ENCODE measurements at regions of chr1 and their contacts with region 1.

Region 1: GRCh38 chr1:240608707-240609106 is 3.2 kb downstream of the GREM2 start:
- DNase-seq: peak; percentile 13
- ATAC-seq: no peak
- H3K4me3 Mint-ChIP-seq: no peak overlapping the region
- H3K27ac Mint-ChIP-seq: no peak overlapping the region
- H3K4me1 Mint-ChIP-seq: peaks cover 20% of the 10 kb centered on the region
- H3K27me3 Mint-ChIP-seq: peaks cover 38% of the 10 kb centered on the region
- CTCF ChIP-seq: no peak

Region 2: GRCh38 chr1:240455228-240455821 is 153.4 kb before region 1 on chr1:
- CTCF ChIA-PET with region 1: interaction called, 5 read pairs
- POLR2A ChIA-PET with region 1: no interaction called
- intact Hi-C with region 1: loop called (anchors 10 kb)
- DNase-seq: no peak
- ATAC-seq: no peak
- H3K4me3 Mint-ChIP-seq: no peak overlapping the region
- H3K27ac Mint-ChIP-seq: no peak overlapping the region
- H3K4me1 Mint-ChIP-seq: no peaks in the 10 kb centered on the region
- H3K27me3 Mint-ChIP-seq: no peaks in the 10 kb centered on the region
- CTCF ChIP-seq: no peak

Region 3: DNA sequence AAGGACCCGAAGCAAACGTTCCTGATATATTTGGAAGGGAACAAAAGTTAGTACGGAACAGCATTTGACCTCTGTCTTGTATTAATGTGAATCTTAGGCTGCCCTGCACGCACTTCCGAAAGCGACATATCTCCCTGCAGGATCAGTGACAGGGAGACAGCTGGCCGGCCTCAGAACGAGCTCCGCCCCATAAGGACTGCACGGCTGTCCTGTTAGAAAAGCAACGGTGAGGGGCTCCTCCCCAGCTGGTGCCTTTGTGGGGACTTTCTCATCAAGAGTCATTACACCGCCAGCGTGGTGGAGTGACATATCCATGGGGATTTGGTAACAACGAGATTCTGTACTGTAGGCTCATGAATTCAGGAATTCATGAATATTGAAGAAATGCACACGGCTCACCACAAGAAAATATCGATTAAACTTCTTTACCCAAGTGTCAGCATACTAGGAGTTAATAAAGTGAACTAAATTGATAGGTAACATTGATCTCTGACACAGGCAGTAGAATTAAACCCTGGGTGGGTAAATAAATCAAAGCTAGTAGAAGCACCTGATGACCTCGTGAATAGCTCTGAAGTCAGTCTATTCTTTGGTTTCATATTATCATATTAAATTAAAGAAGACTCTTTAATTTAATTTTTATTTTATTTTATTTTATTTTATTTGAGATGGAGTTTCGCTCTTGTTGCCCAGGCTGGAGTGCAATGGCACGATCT is 11.4 kb after region 1 on chr1:
- CTCF ChIA-PET with region 1: no interaction called
- POLR2A ChIA-PET with region 1: no interaction called
- intact Hi-C with region 1: no loop called
- DNase-seq: no peak
- ATAC-seq: no peak
- H3K4me3 Mint-ChIP-seq: no peak overlapping the region
- H3K27ac Mint-ChIP-seq: no peak overlapping the region
- H3K4me1 Mint-ChIP-seq: no peaks in the 10 kb centered on the region
- H3K27me3 Mint-ChIP-seq: peaks cover 8% of the 10 kb centered on the region
- CTCF ChIP-seq: no peak

Region 4: DNA sequence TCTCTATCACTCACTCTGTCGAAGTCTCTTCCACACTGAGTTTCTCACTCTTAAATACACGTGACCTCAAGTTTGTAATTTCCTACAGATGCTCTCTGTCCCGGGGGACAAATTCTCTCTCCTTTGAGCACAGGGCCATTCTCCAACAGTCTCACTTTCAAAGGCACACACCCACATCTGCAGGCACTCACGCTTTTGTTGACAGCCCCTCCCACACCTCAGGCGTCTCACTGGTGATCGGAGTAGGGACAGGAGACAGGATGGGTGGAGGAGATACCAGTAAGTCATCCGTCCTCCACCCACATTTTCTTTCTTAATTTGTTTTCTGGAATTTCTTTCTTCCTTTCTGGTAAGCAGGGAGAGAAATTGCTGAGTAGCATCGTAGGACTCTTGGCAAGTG is 43.8 kb after region 1 on chr1:
- CTCF ChIA-PET with region 1: no interaction called
- POLR2A ChIA-PET with region 1: no interaction called
- intact Hi-C with region 1: no loop called
- DNase-seq: no peak
- ATAC-seq: no peak
- H3K4me3 Mint-ChIP-seq: no peak overlapping the region
- H3K27ac Mint-ChIP-seq: no peak overlapping the region
- H3K4me1 Mint-ChIP-seq: no peaks in the 10 kb centered on the region
- H3K27me3 Mint-ChIP-seq: no peaks in the 10 kb centered on the region
- CTCF ChIP-seq: no peak

Region 5: DNA sequence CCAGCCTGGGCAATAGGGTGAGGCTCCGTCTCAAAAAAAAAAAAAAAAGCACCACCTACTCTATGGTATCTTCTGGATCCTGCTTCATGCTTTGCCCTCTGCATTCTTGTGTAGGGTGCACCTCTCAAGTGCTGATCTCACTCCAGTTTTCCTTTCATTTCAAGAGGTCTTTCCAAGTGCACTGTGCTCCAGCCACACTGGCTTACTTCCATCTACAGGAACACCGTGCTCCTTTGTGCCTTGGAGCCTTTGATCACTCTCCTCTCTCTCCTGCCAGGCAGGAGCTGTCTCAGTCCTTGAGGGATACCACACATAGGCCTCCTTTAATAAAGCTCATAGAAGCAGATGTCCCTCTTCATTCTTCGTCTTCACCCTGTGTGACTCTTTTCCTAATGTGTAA is 58.6 kb after region 1 on chr1:
- CTCF ChIA-PET with region 1: no interaction called
- POLR2A ChIA-PET with region 1: no interaction called
- intact Hi-C with region 1: no loop called
- DNase-seq: no peak
- ATAC-seq: no peak
- H3K4me3 Mint-ChIP-seq: no peak overlapping the region
- H3K27ac Mint-ChIP-seq: no peak overlapping the region
- H3K4me1 Mint-ChIP-seq: peaks cover 5% of the 10 kb centered on the region
- H3K27me3 Mint-ChIP-seq: no peaks in the 10 kb centered on the region
- CTCF ChIP-seq: no peak

Region 6: GRCh38 chr1:240790856-240791255 is 182.1 kb after region 1 on chr1:
- CTCF ChIA-PET with region 1: no interaction called
- POLR2A ChIA-PET with region 1: no interaction called
- intact Hi-C with region 1: no loop called
- DNase-seq: no peak
- ATAC-seq: no peak
- H3K4me3 Mint-ChIP-seq: no peak overlapping the region
- H3K27ac Mint-ChIP-seq: no peak overlapping the region
- H3K4me1 Mint-ChIP-seq: no peaks in the 10 kb centered on the region
- H3K27me3 Mint-ChIP-seq: peaks cover 2% of the 10 kb centered on the region
- CTCF ChIP-seq: no peak

Measured in activated CD8-positive, alpha-beta T cell treated with anti-CD3 and anti-CD28 coated beads for 36 hours (primary cell).